ENCODE measurements at regions of chr19 and their contacts with region 1.

Region 1: DNA sequence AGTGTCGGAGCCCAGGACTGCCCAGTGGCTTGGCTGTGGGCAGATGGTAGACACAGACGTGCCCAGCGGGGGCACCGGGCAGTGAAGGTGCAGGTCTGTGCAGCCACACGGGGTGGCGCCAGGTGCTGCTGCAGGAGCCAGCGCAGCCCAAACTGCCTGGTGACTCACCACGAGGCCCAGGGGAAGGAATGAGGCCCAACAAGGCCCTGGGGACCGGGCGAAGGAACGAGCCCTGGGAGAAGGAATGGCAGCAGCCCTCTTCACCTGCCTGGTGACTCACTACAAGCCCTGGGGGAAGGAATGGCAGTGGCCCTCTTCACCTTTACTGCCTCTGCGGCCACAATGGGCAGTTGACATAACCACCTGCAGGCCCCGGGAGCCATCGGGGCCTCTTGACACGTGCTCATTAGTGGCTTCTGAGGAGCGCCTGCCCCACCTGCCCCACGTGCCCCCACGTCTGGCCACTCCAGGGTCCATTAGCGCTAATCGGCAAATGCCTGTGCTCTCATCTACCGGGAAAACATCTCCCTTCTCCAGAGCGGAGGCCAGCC is 9.3 kb downstream of the MED16 start:
- DNase-seq: peak; percentile 97 to 98
- H3K4me3 ChIP-seq: no peak overlapping the region
- H3K27ac ChIP-seq: no peak overlapping the region
- H3K4me1 ChIP-seq: peaks cover 14% of the 10 kb centered on the region
- H3K27me3 ChIP-seq: no peaks in the 10 kb centered on the region
- CTCF ChIP-seq: peak; percentile 74

Region 2: GRCh38 chr19:906480-906879 is 22.7 kb after region 1 on chr19:
- CTCF ChIA-PET with region 1: no interaction called
- POLR2A ChIA-PET with region 1: interaction called, 12 read pairs
- intact Hi-C with region 1: loop called (anchors 2 kb)
- DNase-seq: no peak
- H3K4me3 ChIP-seq: no peak overlapping the region
- H3K27ac ChIP-seq: no peak overlapping the region
- H3K4me1 ChIP-seq: peaks cover 17% of the 10 kb centered on the region
- H3K27me3 ChIP-seq: no peaks in the 10 kb centered on the region
- CTCF ChIP-seq: no peak

Region 3: GRCh38 chr19:919240-920050 is 35.7 kb after region 1 on chr19:
- CTCF ChIA-PET with region 1: no interaction called
- POLR2A ChIA-PET with region 1: no interaction called
- intact Hi-C with region 1: loop called (anchors 1 kb)
- DNase-seq: peak in 1 of 2 experiments; percentile 58
- H3K4me3 ChIP-seq: peak overlapping the region; percentile 55
- H3K27ac ChIP-seq: no peak overlapping the region
- H3K4me1 ChIP-seq: no peaks in the 10 kb centered on the region; the same call in 1 of the 2 replicates
- H3K27me3 ChIP-seq: peaks cover 21% of the 10 kb centered on the region
- CTCF ChIP-seq: no peak